ENCODE measurements at regions of chr12 and their contacts with region 1.

Region 1: GRCh38 chr12:76031537-76032073 is at the start of gene PHLDA1:
- DNase-seq: peak; percentile 88 to 98
- H3K4me3 ChIP-seq: peak within 1 kb of the TSS; percentile 94
- H3K27ac ChIP-seq: peak within 1 kb of the TSS; percentile 95
- H3K4me1 ChIP-seq: peaks cover 37% of the 10 kb centered on the region
- H3K27me3 ChIP-seq: no peaks in the 10 kb centered on the region
- CTCF ChIP-seq: peak; percentile 44; the same call in 1 of the 2 replicates
- total RNA-seq, gene PHLDA1: 29.1 and 38.3 TPM in 2 replicates

Region 2: DNA sequence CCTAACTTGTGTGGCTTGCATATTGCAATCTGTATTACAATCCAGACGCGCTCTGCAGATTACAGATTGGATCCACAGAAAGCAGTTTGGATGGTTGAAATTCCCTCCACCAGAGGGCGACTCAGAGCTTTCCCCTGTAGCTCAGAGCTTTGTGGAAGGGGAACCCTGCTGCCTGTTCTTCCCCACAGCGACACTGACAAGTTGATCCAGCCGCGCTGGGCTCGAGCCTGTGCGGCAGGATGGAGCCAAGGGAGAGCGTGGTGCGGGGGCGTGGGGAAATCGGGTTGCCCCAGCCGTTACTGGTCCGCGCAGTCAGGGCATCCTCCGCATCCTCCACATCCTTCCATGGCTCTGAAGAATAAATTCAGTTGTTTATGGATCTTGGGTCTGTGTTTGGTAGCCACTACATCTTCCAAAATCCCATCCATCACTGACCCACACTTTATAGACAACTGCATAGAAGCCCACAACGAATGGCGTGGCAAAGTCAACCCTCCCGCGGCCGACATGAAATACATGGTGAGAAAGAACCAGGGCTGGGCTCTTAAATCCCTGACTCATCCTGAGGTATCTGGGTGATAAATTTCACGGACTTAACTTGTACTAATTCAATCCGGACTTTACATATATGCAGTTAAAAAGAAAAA is 697.1 kb before region 1 on chr12 and contains the start of gene GLIPR1L1:
- CTCF ChIA-PET with region 1: interaction called, 3 read pairs
- POLR2A ChIA-PET with region 1: no interaction called
- intact Hi-C with region 1: loop called (anchors 10 kb)
- DNase-seq: peak; percentile 16 to 45
- H3K4me3 ChIP-seq: peak within 1 kb of the TSS; percentile 16; the same call in 1 of the 2 replicates
- H3K27ac ChIP-seq: no peak within 1 kb of the TSS
- H3K4me1 ChIP-seq: peaks cover 3% of the 10 kb centered on the region; the same call in 1 of the 2 replicates
- H3K27me3 ChIP-seq: no peaks in the 10 kb centered on the region
- CTCF ChIP-seq: peak; percentile 77
- total RNA-seq, gene GLIPR1L1: not detected in 2 replicates

Region 3: GRCh38 chr12:75623631-75624118 is 407.9 kb before region 1 on chr12:
- CTCF ChIA-PET with region 1: interaction called, 4 read pairs
- POLR2A ChIA-PET with region 1: interaction called, 18 read pairs
- intact Hi-C with region 1: loop called (anchors 2 kb)
- DNase-seq: peak; percentile 33 to 69
- H3K4me3 ChIP-seq: no peak overlapping the region
- H3K27ac ChIP-seq: peak overlapping the region; percentile 62
- H3K4me1 ChIP-seq: peaks cover 16% of the 10 kb centered on the region
- H3K27me3 ChIP-seq: no peaks in the 10 kb centered on the region
- CTCF ChIP-seq: peak; percentile 54; the same call in 1 of the 2 replicates

Region 4: GRCh38 chr12:75784591-75784990 is 247.0 kb before region 1 on chr12:
- CTCF ChIA-PET with region 1: no interaction called
- POLR2A ChIA-PET with region 1: interaction called, 10 read pairs
- intact Hi-C with region 1: loop called (anchors 10 kb)
- DNase-seq: peak; percentile 83 to 84
- H3K4me3 ChIP-seq: no peak overlapping the region
- H3K27ac ChIP-seq: peak overlapping the region; percentile 21; the same call in 1 of the 2 replicates
- H3K4me1 ChIP-seq: peaks cover 40% of the 10 kb centered on the region
- H3K27me3 ChIP-seq: no peaks in the 10 kb centered on the region
- CTCF ChIP-seq: no peak

Region 5: DNA sequence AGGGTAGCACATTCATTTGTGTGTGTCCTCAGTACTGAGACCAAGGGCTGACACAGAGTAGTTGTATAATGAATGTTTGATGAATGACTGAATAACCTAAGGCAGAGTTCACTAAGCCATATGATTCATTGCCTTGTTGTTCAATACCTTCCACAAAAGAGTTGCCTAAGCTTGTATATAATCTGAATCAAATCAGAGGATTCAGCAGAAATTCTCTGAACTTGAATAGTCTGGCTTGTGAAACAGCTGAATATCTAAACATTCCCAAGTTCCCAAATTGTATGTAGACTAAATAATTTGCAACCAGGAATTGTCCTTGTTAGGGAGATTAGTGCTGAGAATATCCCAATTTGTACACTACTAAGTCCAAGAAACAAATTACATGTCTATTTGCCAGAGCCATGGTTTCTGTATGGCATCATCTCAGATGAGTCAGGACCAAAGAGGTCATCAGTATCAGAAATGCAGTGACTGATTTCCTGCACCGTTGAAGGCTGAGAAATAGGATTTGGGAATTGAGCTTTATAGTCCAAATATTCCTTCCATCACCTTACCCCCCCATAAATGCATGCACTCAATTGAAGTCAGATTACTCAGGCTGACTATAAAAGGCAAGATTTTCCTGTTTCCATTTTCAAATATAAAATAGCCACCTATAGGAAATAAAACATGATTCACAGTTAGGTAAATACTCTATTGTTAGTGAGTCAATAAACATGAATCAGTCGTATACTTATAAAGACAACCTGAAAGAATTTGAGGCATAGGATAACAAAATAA is 168.7 kb before region 1 on chr12:
- CTCF ChIA-PET with region 1: no interaction called
- POLR2A ChIA-PET with region 1: no interaction called
- intact Hi-C with region 1: loop called (anchors 10 kb)
- DNase-seq: peak; percentile 4 to 94
- H3K4me3 ChIP-seq: no peak overlapping the region
- H3K27ac ChIP-seq: peak overlapping the region; percentile 93
- H3K4me1 ChIP-seq: peaks cover 61% of the 10 kb centered on the region
- H3K27me3 ChIP-seq: no peaks in the 10 kb centered on the region
- CTCF ChIP-seq: no peak

Region 6: GRCh38 chr12:76020731-76021672 is 10.6 kb before region 1 on chr12:
- CTCF ChIA-PET with region 1: no interaction called
- POLR2A ChIA-PET with region 1: interaction called, 24 read pairs
- intact Hi-C with region 1: no loop called
- DNase-seq: peak; percentile 58 to 95
- H3K4me3 ChIP-seq: peak overlapping the region; percentile 55
- H3K27ac ChIP-seq: peak overlapping the region; percentile 100
- H3K4me1 ChIP-seq: peaks cover 79% of the 10 kb centered on the region
- H3K27me3 ChIP-seq: no peaks in the 10 kb centered on the region
- CTCF ChIP-seq: no peak

Region 7: GRCh38 chr12:76455582-76456345 is 424.2 kb after region 1 on chr12:
- CTCF ChIA-PET with region 1: no interaction called
- POLR2A ChIA-PET with region 1: no interaction called
- intact Hi-C with region 1: loop called (anchors 10 kb)
- DNase-seq: peak; percentile 26 to 91
- H3K4me3 ChIP-seq: no peak overlapping the region
- H3K27ac ChIP-seq: peak overlapping the region; percentile 78
- H3K4me1 ChIP-seq: peaks cover 8% of the 10 kb centered on the region
- H3K27me3 ChIP-seq: no peaks in the 10 kb centered on the region
- CTCF ChIP-seq: peak; percentile 77

Measured in PC-9 (cell line).